Activated CD4-positive, alpha-beta memory T cell treated with anti-CD3 and anti-CD28 coated beads, Interleukin-2, amount 10 ng/mL, durations not matched to agents 7 days and 5 days (primary cell): ENCODE measurements at regions of chr10 and their contacts with region 1.

Region 1: DNA sequence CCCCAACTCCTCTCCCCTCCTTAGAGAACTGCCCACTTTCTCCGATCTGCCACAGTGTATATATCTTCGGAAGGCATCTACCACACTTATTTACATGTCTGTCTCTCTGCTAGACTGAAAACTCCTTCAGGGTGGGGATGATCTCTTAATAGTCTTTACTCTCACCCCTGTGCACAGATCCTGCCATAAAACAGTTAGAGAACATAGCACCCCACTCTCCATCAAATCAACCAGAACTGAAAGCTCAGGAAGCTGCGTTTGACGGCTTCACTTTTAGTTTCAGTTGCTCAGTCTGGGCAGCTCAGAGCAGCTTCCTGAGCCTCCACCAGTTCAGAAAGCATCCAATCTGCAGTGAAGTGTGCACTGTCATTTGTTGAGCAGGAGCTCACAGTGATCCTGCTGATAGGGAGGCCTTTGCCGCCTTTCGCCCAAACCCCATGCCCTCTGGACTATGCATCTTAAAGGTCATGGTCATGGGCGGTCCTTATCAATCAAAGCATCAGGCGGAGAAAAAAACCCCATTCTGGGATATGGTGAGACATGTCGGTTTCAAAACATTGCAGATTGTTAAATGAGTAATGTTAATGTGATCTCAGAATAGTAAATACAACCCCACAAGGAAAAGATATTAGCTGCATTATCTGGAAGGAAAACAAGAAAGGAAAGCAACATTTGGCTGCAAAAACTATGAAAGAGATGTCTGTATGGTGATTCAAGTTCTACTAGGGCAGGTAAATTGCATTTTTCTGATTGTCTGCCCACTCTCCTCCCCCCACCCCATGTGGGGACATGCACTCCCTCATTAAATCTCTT is 167.1 kb upstream of the ADO start:
- DNase-seq: peak; percentile 77
- H3K4me3 Mint-ChIP-seq: no peak overlapping the region
- H3K27ac Mint-ChIP-seq: no peak overlapping the region
- H3K4me1 Mint-ChIP-seq: peaks cover 14% of the 10 kb centered on the region
- H3K27me3 Mint-ChIP-seq: no peaks in the 10 kb centered on the region

Region 2: GRCh38 chr10:62647375-62648092 is 10.1 kb after region 1 on chr10:
- CTCF ChIA-PET with region 1: interaction called, 3 read pairs
- POLR2A ChIA-PET with region 1: interaction called, 14 read pairs
- DNase-seq: no peak
- H3K4me3 Mint-ChIP-seq: no peak overlapping the region
- H3K27ac Mint-ChIP-seq: no peak overlapping the region
- H3K4me1 Mint-ChIP-seq: peaks cover 20% of the 10 kb centered on the region
- H3K27me3 Mint-ChIP-seq: no peaks in the 10 kb centered on the region

Region 3: DNA sequence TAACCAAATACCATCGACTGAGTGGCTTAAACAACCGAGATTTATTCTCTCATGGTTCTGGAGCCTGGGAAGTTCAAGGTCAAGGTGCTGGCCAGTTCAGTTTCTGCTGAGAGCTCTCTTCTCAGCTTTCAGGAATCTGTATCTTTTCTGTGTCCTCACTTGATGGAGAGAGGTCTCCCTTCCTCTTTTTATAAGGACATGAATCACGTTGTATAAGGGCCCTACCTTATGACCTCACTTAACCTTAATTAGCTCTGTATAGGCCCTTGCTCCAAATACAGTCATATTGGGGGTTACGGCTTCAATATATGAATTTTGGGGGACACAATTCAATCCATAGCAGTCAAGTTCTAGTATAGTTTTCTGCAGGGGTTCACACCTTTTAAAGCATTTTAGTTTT is 31.9 kb after region 1 on chr10:
- CTCF ChIA-PET with region 1: no interaction called
- POLR2A ChIA-PET with region 1: no interaction called
- DNase-seq: no peak
- H3K4me3 Mint-ChIP-seq: no peak overlapping the region
- H3K27ac Mint-ChIP-seq: no peak overlapping the region
- H3K4me1 Mint-ChIP-seq: no peaks in the 10 kb centered on the region
- H3K27me3 Mint-ChIP-seq: no peaks in the 10 kb centered on the region

Region 4: GRCh38 chr10:62732841-62733653 is 95.6 kb after region 1 on chr10:
- CTCF ChIA-PET with region 1: no interaction called
- POLR2A ChIA-PET with region 1: interaction called, 26 read pairs
- DNase-seq: peak; percentile 54
- H3K4me3 Mint-ChIP-seq: peak overlapping the region; percentile 47
- H3K27ac Mint-ChIP-seq: no peak overlapping the region
- H3K4me1 Mint-ChIP-seq: peaks cover 15% of the 10 kb centered on the region
- H3K27me3 Mint-ChIP-seq: peaks cover 24% of the 10 kb centered on the region

Region 5: DNA sequence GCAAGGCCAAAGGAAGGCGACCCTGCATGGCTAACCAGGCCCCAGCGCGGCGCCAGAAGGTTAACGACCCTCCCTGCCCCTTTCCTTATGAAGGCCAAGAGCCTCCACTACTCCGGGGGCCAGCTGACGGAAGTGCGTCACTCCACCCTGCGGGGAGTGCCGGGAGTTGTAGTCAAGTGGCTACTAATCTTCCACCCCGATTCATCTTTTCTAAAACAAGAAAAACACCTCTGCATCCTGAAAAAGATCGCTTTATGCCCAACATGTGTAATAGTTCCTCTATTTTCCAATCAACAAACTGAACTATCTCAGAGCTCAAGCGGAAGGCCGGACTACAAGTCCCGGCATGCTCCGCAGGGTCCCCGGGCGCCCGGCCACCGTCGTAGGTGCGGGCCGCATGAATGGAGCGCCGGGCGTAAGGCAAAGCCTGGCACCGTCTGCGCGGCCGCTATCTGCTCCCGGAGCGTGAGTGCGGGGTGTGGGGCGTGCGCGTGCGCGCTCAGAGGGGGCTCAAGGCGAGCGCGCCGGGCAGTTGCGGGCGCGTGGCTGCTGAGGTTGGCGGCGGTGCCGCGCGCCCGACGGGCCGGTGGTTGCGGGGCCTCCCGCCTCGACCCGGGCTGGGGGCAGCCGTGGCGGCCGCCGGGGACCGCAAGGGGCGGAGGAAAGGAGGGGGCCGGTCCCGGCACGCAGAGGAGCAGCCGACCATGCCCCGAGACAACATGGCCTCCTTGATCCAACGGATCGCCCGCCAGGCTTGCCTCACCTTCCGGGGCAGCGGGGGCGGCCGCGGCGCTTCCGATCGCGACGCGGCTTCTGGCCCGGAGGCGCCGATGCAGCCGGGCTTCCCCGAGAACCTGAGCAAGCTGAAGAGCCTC is 167.1 kb after region 1 on chr10 and contains the start of gene ADO:
- CTCF ChIA-PET with region 1: interaction called, 5 read pairs
- POLR2A ChIA-PET with region 1: interaction called, 13 read pairs
- DNase-seq: peak; percentile 76
- H3K4me3 Mint-ChIP-seq: peak within 1 kb of the TSS; percentile 88
- H3K27ac Mint-ChIP-seq: peak within 1 kb of the TSS; percentile 96
- H3K4me1 Mint-ChIP-seq: peaks cover 32% of the 10 kb centered on the region
- H3K27me3 Mint-ChIP-seq: peaks cover 10% of the 10 kb centered on the region
- total RNA-seq, gene ADO: 21.8 to 22.2 TPM